Mammary epithelial cell (primary cell): ENCODE measurements at regions of chr14 and their contacts with region 1.

Region 1: DNA sequence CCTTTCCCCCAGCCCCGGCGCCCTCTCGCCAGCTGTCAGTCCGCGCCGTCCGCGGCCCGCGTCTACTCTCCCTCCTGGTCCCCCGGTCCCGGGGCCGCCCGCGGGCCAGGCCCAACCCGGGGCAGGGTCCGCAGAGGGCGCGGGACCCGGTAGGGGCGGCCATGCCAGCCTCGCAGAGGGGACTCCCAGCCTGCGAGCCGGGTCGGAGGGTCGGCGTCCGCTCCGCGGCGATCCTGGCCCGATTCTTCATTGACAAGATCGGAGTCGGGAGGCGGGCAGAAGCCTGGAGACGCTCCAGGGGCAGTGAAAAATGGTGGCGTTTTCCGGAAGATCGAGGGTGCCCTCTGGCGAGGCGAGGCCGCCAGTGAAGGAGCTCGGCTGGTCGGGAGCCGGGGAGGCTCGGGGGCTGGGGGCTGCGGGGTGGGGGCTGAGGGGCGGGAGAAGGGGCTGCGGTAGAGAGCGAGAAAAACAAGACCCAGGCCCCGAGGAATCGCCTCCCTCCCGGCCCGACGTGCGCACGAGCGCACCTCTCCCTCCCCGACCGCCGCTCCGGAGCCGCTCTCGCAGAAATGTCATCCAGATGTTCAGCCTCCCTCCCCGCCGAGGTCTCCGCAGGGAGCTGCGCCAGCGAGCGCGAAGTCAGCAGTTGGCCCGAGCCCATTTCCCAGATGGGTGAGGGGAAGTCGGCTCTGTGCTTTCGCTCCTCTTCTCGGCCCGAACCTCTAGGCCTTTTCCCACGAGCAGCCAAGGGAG is 647 bp upstream of the TGFB3 start:
- DNase-seq: peak; percentile 72
- H3K4me3 ChIP-seq: peak overlapping the region; percentile 57 to 62 (median 61)
- H3K27ac ChIP-seq: peak overlapping the region; percentile 59
- H3K4me1 ChIP-seq: peaks cover 34% of the 10 kb centered on the region
- H3K27me3 ChIP-seq: no peaks in the 10 kb centered on the region
- CTCF ChIP-seq: peak; percentile 28 to 71

Region 2: GRCh38 chr14:75577729-75578101 is 404.7 kb before region 1 on chr14:
- CTCF ChIA-PET with region 1: no interaction called
- dilution Hi-C with region 1: no loop called
- in situ Hi-C with region 1: no loop called
- intact Hi-C with region 1: loop called (anchors 1 kb)
- DNase-seq: peak; percentile 66
- H3K4me3 ChIP-seq: peak overlapping the region; percentile 51 to 71 (median 51)
- H3K27ac ChIP-seq: peak overlapping the region; percentile 17
- H3K4me1 ChIP-seq: peaks cover 10% of the 10 kb centered on the region
- H3K27me3 ChIP-seq: no peaks in the 10 kb centered on the region
- CTCF ChIP-seq: peak; percentile 74 to 89

Region 3: GRCh38 chr14:75654127-75654732 is 328.2 kb before region 1 on chr14:
- CTCF ChIA-PET with region 1: no interaction called
- dilution Hi-C with region 1: no loop called
- in situ Hi-C with region 1: no loop called
- intact Hi-C with region 1: loop called (anchors 1 kb)
- DNase-seq: peak; percentile 61
- H3K4me3 ChIP-seq: no peak overlapping the region
- H3K27ac ChIP-seq: no peak overlapping the region
- H3K4me1 ChIP-seq: peaks cover 11% of the 10 kb centered on the region
- H3K27me3 ChIP-seq: no peaks in the 10 kb centered on the region
- CTCF ChIP-seq: peak; percentile 99

Region 4: GRCh38 chr14:75709207-75709812 is 273.1 kb before region 1 on chr14:
- CTCF ChIA-PET with region 1: interaction called, 20 read pairs
- dilution Hi-C with region 1: no loop called
- in situ Hi-C with region 1: loop called (anchors 5 kb)
- intact Hi-C with region 1: loop called (anchors 1 kb)
- DNase-seq: peak; percentile 49
- H3K4me3 ChIP-seq: no peak overlapping the region
- H3K27ac ChIP-seq: no peak overlapping the region
- H3K4me1 ChIP-seq: peaks cover 19% of the 10 kb centered on the region
- H3K27me3 ChIP-seq: no peaks in the 10 kb centered on the region
- CTCF ChIP-seq: peak; percentile 73 to 87

Region 5: DNA sequence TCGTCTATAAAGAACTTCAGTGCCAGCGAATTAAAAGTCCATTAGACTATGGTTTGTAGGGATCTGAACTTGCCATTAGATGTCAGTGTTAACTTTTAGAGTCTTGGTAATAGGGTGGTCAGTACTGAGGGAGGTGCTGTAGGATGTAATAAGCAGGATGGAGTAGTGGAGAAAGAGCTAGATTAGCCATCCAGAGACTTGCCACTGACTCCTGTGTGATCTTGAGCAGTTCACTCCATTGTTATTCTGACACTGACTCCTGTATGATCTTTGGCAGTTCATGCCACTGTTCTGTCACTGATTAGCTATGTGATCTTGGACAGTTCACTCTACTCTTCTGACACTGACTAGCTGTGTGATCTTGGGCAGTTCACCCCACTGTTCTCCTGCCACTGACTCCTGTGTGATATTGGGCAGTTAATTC is 187.8 kb before region 1 on chr14:
- CTCF ChIA-PET with region 1: interaction called, 18 read pairs
- dilution Hi-C with region 1: no loop called
- in situ Hi-C with region 1: no loop called
- intact Hi-C with region 1: loop called (anchors 1 kb)
- DNase-seq: peak; percentile 42
- H3K4me3 ChIP-seq: no peak overlapping the region
- H3K27ac ChIP-seq: no peak overlapping the region
- H3K4me1 ChIP-seq: no peaks in the 10 kb centered on the region
- H3K27me3 ChIP-seq: no peaks in the 10 kb centered on the region
- CTCF ChIP-seq: peak; percentile 21 to 43

Region 6: GRCh38 chr14:75906676-75907280 is 75.7 kb before region 1 on chr14:
- CTCF ChIA-PET with region 1: interaction called, 11 read pairs
- dilution Hi-C with region 1: loop called (anchors 10 kb)
- in situ Hi-C with region 1: no loop called
- intact Hi-C with region 1: loop called (anchors 1 kb)
- DNase-seq: peak; percentile 33
- H3K4me3 ChIP-seq: no peak overlapping the region
- H3K27ac ChIP-seq: no peak overlapping the region
- H3K4me1 ChIP-seq: peaks cover 10% of the 10 kb centered on the region
- H3K27me3 ChIP-seq: no peaks in the 10 kb centered on the region
- CTCF ChIP-seq: peak; percentile 82 to 93

Region 7: GRCh38 chr14:75911883-75912282 is 70.6 kb before region 1 on chr14:
- CTCF ChIA-PET with region 1: interaction called, 11 read pairs
- dilution Hi-C with region 1: loop called (anchors 10 kb)
- in situ Hi-C with region 1: no loop called
- intact Hi-C with region 1: no loop called
- DNase-seq: no peak
- H3K4me3 ChIP-seq: no peak overlapping the region
- H3K27ac ChIP-seq: no peak overlapping the region
- H3K4me1 ChIP-seq: peaks cover 10% of the 10 kb centered on the region
- H3K27me3 ChIP-seq: no peaks in the 10 kb centered on the region
- CTCF ChIP-seq: no peak